ENCODE measurements at regions of chr2 and their contacts with region 1.

Region 1: DNA sequence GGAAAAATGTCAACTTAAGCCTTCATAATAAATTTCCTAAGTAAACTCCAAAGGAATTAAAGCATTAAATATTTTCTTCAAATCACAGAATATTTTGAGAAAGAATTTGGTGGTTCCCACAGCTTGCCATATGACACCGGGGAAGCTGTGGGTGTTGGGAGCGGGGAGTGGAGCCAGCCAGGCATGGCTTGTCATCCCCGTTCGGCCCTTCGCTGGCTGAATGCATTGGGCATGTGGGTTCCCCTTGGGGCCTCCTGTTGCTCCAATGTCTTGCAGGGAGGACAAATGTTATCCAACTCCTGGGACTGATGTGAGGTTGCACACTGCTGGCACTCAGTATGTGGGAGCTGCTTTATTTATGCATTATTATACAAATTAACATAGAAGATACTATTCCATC is 18.6 kb downstream of the NGEF start:
- DNase-seq: peak; percentile 66

Region 2: DNA sequence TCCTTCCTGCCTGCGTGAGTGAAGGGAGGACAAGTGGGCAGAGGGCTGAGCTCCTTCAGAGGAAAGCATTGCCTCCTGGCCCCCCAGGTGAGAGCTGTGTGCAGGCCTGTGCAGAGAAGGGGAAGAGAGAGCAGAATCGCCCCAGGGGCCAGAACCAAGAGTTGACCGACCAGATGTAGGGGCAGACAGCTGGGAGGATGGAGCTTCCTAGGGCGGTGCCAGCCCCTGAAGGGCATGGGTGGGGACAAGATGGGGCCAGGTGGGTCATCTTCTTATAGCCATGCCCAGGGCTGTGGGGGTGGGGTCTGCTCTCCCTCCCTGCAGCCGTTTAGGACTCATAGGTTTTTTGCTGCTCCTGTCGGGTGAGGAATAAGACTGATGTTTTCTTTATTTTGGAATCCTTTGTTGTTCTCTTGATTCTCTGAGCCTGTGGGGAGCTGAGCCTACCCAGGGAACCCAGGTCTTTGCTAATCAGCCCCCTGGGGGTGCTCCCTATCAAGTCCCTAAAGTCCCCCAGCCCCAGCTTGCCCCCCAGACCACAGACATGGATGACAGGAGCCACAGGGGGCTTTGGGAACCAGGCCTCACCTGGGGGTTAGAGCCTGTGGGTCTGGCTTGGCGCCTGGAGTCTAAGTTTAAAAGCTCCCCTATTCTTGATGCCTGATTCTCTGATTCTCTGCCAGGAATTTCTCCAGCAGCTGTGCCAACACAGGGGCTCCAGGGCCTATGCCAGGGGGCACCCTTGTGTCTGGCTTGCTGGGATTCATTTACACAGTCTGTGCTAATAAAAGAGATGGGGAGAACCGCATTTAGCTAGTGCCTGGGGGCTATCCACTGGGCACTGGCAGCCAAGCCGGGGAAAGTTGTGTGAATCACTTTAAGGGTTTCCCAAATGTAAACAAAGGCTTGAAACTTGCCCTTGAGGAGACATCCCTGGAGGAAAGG is 370.4 kb before region 1 on chr2:
- intact Hi-C with region 1: loop called in 1 of 2 experiments (anchors 5 kb)
- DNase-seq: no peak

Region 3: GRCh38 chr2:233418761-233419625 is 424.5 kb after region 1 on chr2:
- intact Hi-C with region 1: no loop called
- DNase-seq: no peak

Region 4: GRCh38 chr2:234025466-234026185 is 1031.2 kb after region 1 on chr2:
- intact Hi-C with region 1: no loop called
- DNase-seq: no peak

Measured in posterior vena cava (tissue), 2 donors.